Heart right ventricle (tissue), 16 donors: ENCODE measurements at regions of chr19 and their contacts with region 1.

Region 1: GRCh38 chr19:47075179-47075810 is 26.9 kb upstream of the TMEM160 start:
- DNase-seq: no peak
- ATAC-seq: peak in 2 of 8 donors; percentile 10 to 24
- H3K4me3 ChIP-seq: no peak overlapping the region
- H3K27ac ChIP-seq: no peak overlapping the region
- H3K4me1 ChIP-seq: peaks cover 0 to 23% (median 6%) of the 10 kb centered on the region in 9 donors
- H3K27me3 ChIP-seq: no peaks in the 10 kb centered on the region
- CTCF ChIP-seq: no peak

Region 2: GRCh38 chr19:47013041-47013517 is 62.2 kb before region 1 on chr19:
- intact Hi-C with region 1: no loop called
- DNase-seq: peak; percentile 81 to 87
- ATAC-seq: peak; percentile 89 to 97 (median 96)
- H3K4me3 ChIP-seq: no peak overlapping the region
- H3K27ac ChIP-seq: no peak overlapping the region
- H3K4me1 ChIP-seq: peaks cover 0 to 9% (median 4%) of the 10 kb centered on the region in 9 donors
- H3K27me3 ChIP-seq: peaks cover 0 to 11% (median 0%) of the 10 kb centered on the region in 7 donors
- CTCF ChIP-seq: peak; percentile 98 to 100 (median 99)

Region 3: DNA sequence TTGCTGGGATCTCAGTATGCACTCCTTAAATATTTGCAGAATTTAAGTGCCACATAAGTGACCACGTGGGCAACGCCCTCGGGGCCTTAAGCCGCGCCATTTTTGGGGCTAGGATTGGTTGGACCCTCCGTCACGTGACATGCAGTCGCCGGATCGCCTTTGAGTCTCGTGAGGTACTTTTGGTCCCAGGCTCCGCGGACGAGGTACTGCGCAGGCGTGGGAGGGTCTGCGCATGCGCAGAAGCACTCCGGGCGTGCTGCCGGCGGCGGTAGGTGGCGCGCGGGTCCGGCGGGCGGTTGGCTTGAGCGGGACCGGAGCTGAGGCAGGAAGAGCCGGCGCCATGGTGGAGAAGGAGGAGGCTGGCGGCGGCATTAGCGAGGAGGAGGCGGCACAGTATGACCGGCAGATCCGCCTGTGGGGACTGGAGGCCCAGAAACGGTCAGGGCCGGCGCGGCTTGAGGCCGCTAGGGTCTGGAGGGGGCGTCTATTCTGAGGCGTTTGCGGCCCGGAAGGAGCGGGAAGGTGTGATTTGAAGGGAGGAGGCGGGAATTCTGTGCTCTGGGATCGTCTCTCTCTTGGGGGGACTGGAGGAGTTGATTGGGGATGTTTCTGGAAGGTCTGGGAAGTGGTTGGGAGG is 55.4 kb after region 1 on chr19 and contains the start of gene SAE1:
- intact Hi-C with region 1: loop called in 7 of 10 experiments (anchors 1 to 2 kb)
- DNase-seq: peak; percentile 95
- ATAC-seq: peak; percentile 94 to 98 (median 96)
- H3K4me3 ChIP-seq: peak within 1 kb of the TSS; percentile 61 to 86 (median 72)
- H3K27ac ChIP-seq: peak within 1 kb of the TSS; percentile 68 to 94 (median 91)
- H3K4me1 ChIP-seq: peaks cover 0 to 51% (median 33%) of the 10 kb centered on the region in 9 donors
- H3K27me3 ChIP-seq: no peaks in the 10 kb centered on the region
- CTCF ChIP-seq: peak; percentile 9 to 82 (median 51)
- total RNA-seq, gene SAE1: 32.5 to 53.3 (median 45.5) TPM